Heart right ventricle (tissue), 16 donors: ENCODE measurements at regions of chr2 and their contacts with region 1.

Region 1: DNA sequence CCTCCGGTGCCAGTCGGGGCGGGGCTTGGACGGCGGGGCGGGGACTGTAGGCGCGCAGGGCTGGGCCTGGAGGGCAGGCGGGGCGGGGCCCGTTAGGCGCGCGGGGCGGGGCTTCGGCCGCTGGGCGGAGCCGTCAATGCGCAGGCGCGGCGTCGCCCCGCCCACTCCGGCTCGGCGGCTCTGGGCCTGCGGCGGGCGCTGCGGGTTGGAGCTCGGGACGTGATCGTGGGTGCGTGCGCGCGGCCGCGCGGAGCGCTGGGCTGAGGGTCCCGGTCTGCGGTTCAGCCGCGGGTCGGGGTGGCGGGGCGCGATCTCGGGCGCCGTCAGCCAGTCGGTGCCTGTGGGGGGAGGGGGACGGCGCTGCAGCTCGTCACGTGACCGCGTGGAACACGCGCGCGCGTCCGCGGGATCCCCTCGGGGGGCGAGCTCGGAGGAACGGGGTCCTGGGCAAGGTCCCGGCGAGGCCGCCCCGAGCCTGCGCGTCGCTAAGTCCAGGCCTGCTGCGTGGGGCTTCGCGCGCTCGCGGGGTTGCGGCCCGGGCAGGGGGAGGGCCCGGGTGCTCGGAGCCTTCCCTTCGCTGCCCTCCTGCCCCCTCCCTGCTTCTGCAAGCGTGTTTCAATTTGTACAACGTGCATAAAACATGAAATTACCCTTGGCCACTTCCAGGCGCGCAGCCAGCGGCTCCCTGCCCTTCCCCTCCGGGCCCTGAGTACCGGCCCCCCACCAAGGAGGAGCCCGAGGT is at the start of gene D2HGDH:
- DNase-seq: peak; percentile 93 to 97
- ATAC-seq: peak; percentile 91 to 97 (median 94)
- H3K4me3 ChIP-seq: peak within 1 kb of the TSS; percentile 79 to 100 (median 92)
- H3K27ac ChIP-seq: peak within 1 kb of the TSS; percentile 84 to 96 (median 94)
- H3K4me1 ChIP-seq: peaks cover 4 to 29% (median 16%) of the 10 kb centered on the region in 9 donors
- H3K27me3 ChIP-seq: no peaks in the 10 kb centered on the region
- CTCF ChIP-seq: no peak
- total RNA-seq, gene D2HGDH: 15.1 to 22.8 (median 19.1) TPM

Region 2: DNA sequence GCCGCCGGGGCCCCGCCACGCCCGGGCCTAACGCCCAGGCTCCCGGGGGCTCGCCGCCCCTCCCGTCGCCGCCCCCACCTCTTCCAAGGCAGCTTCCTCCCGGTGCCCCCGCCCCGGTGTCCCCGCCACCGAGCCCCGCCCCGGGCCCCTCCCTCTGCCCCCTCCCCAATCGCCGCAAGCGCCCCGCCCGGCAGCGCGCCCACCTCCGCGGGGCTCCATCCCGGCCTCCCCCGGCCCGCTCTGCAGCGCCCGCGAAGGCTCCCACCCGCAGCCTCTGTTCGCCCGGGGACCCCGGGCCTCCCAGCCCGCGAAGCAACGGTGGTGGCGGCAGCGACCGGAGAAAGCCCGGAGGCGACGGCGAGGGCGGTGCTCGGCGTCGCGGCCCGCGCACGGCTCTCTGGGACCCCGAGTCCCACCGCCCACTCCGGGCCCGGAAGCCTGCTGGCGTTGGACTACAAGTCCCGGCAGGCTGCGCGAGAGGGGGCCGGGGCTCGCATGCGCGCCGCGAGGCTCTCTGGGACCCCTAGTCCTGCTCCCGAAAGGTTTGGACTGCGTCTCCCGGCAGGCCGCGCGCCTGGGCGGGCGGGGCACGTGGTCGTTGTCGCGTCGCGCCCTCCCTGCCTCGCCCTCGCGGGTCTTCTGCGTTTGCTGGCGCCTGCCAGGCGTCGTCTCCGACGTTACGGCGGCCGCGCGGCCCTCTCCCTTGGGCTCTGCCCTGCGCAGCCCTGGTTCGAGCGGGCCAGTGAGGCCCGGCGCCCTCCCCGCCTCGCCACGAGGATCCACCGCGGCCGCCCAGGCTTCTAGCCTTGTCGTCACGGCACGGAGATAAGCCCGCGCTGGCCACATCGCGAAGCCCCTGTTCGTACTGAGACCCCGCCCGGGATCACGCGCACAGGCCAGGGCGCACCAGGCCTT is 226.1 kb before region 1 on chr2 and contains the start of gene STK25:
- intact Hi-C with region 1: loop called in 1 of 10 experiments (anchors 5 kb)
- DNase-seq: peak; percentile 97 to 99
- ATAC-seq: peak; percentile 97 to 99 (median 98)
- H3K4me3 ChIP-seq: peak within 1 kb of the TSS; percentile 75 to 98 (median 90)
- H3K27ac ChIP-seq: peak within 1 kb of the TSS; percentile 75 to 94 (median 88)
- H3K4me1 ChIP-seq: peaks cover 23 to 44% (median 35%) of the 10 kb centered on the region in 9 donors
- H3K27me3 ChIP-seq: no peaks in the 10 kb centered on the region
- CTCF ChIP-seq: peak in 1 of 9 donors; percentile 0
- total RNA-seq, gene STK25: 66.1 to 104 (median 81.9) TPM

Region 3: DNA sequence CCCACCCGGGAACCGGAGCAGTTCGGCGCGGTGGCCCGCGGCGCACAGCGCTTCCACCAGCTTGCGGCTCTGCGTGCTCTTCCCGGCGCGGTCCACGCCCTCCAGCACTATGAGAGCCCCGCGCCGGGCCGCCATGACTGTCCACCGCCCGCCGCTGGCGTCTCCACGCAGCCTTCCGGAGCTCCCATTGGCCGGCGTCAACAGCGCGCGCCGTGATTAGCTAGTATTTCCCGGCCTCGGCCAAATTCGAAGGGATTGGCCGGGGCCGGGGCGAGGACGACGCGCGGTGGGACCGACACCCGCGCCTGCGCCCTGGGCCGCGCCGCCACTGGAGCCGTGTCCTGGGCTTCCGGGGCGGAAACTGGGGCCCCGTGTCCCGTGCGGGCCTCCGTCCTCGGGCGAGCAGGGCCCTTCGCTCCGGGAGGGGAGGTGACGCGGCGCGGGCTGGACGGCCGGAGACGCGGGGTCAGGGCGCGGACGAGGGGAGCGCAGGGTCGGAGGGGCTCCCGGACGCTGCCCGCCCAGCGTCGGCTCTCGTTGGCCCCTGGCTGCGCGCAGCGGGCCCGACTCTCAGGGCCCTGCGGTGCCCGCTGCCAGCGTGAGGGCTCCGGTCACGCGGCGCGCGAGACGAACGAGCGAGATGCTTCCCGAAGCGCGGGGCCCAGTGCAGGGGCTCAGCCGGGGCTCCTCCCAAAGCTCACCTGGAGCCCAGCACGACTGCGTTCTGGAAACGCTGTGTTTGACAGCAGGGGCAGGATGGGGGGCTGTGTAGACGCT is 47.8 kb before region 1 on chr2 and contains the start of gene DTYMK:
- intact Hi-C with region 1: loop called in 1 of 10 experiments (anchors 10 kb)
- DNase-seq: peak; percentile 96 to 97
- ATAC-seq: peak; percentile 98 to 99 (median 99)
- H3K4me3 ChIP-seq: peak within 1 kb of the TSS; percentile 62 to 99 (median 89)
- H3K27ac ChIP-seq: peak within 1 kb of the TSS; percentile 78 to 98 (median 93)
- H3K4me1 ChIP-seq: peaks cover 10 to 32% (median 25%) of the 10 kb centered on the region in 9 donors
- H3K27me3 ChIP-seq: no peaks in the 10 kb centered on the region
- CTCF ChIP-seq: no peak
- total RNA-seq, gene DTYMK: 6.4 to 12.4 (median 9.3) TPM

Region 4: DNA sequence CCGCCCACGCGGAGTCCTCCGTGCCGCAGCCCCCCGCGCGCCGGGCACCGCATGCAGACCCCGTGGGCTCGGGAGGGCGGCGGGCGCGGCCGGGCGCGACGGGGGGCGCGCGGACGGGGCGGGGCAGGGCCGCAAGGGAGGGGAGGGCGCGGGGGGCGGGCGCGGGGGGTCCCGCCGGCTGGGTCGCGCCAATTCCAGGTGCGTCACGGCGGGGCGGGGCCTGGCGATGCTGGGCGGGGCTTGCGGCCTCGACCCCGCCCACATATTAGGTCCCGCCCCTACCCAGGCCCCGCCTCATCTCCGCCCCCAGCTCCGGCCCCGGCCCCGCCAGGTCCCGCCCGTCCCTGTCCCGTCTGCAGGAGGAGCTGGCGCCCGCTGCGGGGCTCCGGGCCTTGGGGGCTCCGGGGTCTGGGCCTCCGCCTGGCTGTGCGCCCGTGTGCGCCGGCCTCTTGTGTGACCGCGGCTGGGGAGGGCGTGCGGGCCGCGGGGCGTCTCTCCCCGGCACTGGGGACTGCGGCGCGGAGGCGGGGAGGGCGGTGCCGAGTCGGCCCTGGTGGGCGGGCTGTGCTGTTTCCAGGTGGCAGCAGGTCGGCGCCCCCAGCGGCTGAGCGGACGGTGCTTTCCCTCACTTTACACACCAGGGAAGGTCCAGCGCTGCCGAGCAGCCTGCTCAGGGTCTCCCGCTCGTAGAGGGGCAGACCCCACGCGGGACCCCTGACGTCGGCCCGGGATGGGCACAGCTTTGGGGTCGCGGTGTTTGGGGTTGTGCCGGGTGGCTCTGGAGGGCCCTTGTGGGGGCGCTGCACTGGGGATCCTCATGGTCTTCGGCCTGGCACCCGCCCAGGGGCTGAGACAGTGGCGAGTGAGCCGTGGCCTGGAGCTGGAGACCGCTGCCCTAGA is 32.3 kb before region 1 on chr2:
- intact Hi-C with region 1: loop called in 1 of 10 experiments (anchors 1 kb)
- DNase-seq: peak; percentile 76 to 88
- ATAC-seq: peak; percentile 89 to 94 (median 92)
- H3K4me3 ChIP-seq: peak overlapping the region; percentile 64 to 94 (median 81)
- H3K27ac ChIP-seq: peak overlapping the region; percentile 85 to 95 (median 89)
- H3K4me1 ChIP-seq: peaks cover 3 to 27% (median 19%) of the 10 kb centered on the region in 9 donors
- H3K27me3 ChIP-seq: no peaks in the 10 kb centered on the region
- CTCF ChIP-seq: peak in 7 of 9 donors; percentile 31 to 68 (median 42)

Region 5: GRCh38 chr2:241859436-241860183 is 125.0 kb after region 1 on chr2:
- intact Hi-C with region 1: loop called in 1 of 10 experiments (anchors 10 kb)
- DNase-seq: peak; percentile 67 to 73
- ATAC-seq: peak; percentile 53 to 84 (median 71)
- H3K4me3 ChIP-seq: peak overlapping the region in 8 of 10 donors; percentile 27 to 47 (median 42)
- H3K27ac ChIP-seq: peak overlapping the region; percentile 80 to 98 (median 92)
- H3K4me1 ChIP-seq: peaks cover 22 to 41% (median 27%) of the 10 kb centered on the region in 9 donors
- H3K27me3 ChIP-seq: peaks cover 0 to 28% (median 18%) of the 10 kb centered on the region in 7 donors
- CTCF ChIP-seq: peak in 2 of 9 donors; percentile 26 to 35

Region 6: GRCh38 chr2:241877989-241878970 is 143.6 kb after region 1 on chr2:
- intact Hi-C with region 1: loop called in 9 of 10 experiments (anchors 5 to 10 kb)
- DNase-seq: peak; percentile 59 to 82
- ATAC-seq: peak in 5 of 8 donors; percentile 19 to 52 (median 41)
- H3K4me3 ChIP-seq: no peak overlapping the region
- H3K27ac ChIP-seq: no peak overlapping the region
- H3K4me1 ChIP-seq: peaks cover 3 to 26% (median 15%) of the 10 kb centered on the region in 9 donors
- H3K27me3 ChIP-seq: no peaks in the 10 kb centered on the region
- CTCF ChIP-seq: peak; percentile 44 to 71 (median 66)